ENCODE measurements at regions of chr20 and their contacts with region 1.

Region 1: GRCh38 chr20:49583669-49584417 is 15.9 kb upstream of the PTGIS start:
- DNase-seq: peak; percentile 82 to 95
- ATAC-seq: peak; percentile 87 to 92
- H3K4me3 ChIP-seq: no peak overlapping the region
- H3K27ac ChIP-seq: peak overlapping the region; percentile 84 to 88
- H3K4me1 ChIP-seq: peaks cover 52% of the 10 kb centered on the region
- CTCF ChIP-seq: no peak
- EP300 ChIP-seq: peak; percentile 86 to 87; a peak in 4 of 5 replicates
- POLR2A ChIP-seq: no peak
- RAD21 ChIP-seq: peak in 1 of 2 experiments; percentile 22; a peak in 2 of 5 replicates

Region 2: DNA sequence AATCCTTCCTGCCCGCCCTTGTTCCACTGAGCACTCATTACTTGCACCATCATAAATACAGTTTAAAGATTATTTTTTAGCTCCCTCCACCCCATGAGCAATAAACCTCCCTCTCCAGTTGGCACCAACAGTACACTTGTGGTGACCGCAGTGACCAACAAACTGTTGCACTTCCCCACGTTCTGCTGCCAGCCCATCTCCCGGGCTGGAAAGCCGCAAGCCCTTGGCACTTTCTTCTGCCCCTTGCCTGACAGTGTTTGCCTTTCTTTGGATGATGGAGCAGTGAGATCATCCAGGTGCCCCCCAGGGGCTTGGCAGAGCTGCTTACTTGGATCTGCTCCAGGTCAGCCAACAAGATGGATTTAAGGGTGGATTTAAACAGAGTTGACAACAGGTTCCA is 122.9 kb before region 1 on chr20:
- CTCF ChIA-PET with region 1: no interaction called
- POLR2A ChIA-PET with region 1: no interaction called
- DNase-seq: no peak
- ATAC-seq: no peak
- H3K4me3 ChIP-seq: no peak overlapping the region
- H3K27ac ChIP-seq: no peak overlapping the region
- H3K4me1 ChIP-seq: 0 out of 3 replicates have a peak, but pooled peaks cover 7% of the 10 kb centered on the region
- CTCF ChIP-seq: no peak
- EP300 ChIP-seq: no peak
- POLR2A ChIP-seq: no peak
- RAD21 ChIP-seq: no peak

Region 3: DNA sequence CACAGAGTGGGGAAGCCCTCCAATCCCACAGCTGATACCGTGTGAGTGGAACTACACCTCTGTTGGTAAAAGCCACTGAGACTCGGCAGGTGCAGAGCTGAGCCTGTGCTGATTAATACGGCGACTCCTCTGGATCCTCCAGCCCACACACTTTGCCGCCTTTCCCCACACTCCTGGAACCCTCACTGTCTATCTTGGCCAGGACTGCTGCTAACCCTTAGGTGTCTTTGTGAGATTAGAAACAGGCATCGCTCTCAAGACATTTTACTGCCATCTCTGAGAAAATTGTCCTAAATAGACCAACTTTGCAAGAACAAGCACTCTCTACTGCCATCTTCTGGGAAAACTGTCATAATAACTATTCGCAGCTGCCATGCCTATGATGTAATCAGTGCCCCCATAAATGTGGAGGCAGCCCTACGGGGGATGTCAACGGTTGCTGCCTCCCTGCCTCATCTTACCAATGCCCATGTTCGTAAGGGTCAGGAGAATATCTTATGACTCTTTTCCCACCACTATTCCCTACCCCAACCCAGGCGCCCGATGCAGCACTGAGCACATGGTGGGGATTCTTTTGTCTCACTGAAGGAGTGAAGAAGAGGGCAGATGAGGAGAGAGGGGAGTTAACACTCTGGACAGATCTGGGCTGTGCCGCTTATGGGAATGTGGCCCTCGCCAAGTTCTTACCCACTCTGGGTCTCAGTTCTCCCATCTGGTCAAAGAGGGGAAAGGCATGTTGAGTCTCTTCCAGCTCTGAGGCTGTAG is 75.2 kb before region 1 on chr20:
- CTCF ChIA-PET with region 1: no interaction called
- POLR2A ChIA-PET with region 1: no interaction called
- DNase-seq: peak; percentile 52 to 61
- ATAC-seq: peak; percentile 66 to 80
- H3K4me3 ChIP-seq: no peak overlapping the region
- H3K27ac ChIP-seq: peak overlapping the region; percentile 21 to 50; a peak in 2 of 6 replicates
- H3K4me1 ChIP-seq: peaks cover 12% of the 10 kb centered on the region; the same call in 1 of the 3 replicates
- CTCF ChIP-seq: peak; percentile 81
- EP300 ChIP-seq: no peak
- POLR2A ChIP-seq: no peak
- RAD21 ChIP-seq: peak; percentile 67 to 72

Region 4: DNA sequence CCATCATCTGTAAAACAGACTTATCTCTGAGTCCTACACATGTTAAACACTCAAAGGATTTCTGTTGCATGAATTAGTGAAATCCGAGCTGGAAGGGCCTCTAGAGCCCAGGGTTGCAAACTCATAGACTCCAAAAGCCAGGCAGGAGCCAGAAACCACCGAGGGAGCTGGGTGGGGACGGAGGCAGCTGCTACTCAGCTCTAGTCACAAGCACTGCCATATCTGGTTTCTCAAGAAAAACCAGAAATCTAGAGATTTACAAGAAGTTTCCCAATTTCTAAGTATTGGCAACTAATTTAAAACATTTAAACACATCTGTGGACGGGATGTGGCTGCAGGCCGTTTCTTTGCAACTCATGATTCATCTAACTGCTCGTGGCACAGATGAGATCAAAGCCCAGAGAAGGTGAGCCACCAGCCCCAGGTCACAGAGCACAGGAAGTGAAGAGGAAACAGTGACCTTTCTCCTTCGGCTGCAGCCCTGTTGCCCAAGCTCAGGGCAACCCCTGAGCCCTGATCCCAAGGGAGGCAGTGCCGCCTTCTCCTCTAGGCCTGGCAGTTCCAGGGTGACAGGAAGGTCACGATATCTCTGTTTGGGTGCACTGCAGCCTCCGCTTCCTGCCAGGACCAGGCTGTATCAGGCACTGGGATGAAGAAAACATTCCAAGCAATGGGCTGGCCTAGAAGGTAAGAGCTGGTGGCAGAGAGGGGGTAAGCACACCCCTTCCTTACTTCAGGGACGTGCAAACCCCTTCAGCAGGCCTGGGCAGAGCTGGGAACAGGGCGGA is 10.5 kb after region 1 on chr20:
- CTCF ChIA-PET with region 1: interaction called, 13 read pairs
- POLR2A ChIA-PET with region 1: interaction called, 3 read pairs
- DNase-seq: no peak
- ATAC-seq: peak; percentile 30 to 58; a peak in 4 of 6 replicates
- H3K4me3 ChIP-seq: no peak overlapping the region
- H3K27ac ChIP-seq: peak overlapping the region; percentile 53 to 78
- H3K4me1 ChIP-seq: peaks cover 37% of the 10 kb centered on the region
- CTCF ChIP-seq: no peak
- EP300 ChIP-seq: no peak
- POLR2A ChIP-seq: no peak
- RAD21 ChIP-seq: no peak

Region 5: DNA sequence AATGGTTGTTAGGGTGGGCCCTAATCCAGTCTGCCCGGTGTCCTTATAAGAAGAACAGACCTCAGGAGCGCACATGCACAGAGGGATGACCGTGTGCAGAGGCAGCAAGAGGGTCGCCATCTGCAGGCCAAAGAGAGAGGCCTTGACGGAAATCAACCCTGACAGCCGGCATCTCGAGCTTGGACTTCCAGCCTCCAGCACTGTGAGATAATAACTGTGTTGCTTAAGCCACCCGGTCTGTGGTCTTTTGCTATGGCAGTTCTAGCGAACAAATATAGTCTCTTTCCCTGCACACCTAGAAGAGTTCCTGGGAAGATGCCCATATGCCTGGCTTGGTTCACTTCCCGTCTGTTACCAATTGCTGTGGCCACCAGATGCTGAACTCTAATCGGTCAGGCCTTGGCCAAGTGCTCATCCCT is 19.4 kb after region 1 on chr20:
- CTCF ChIA-PET with region 1: interaction called, 115 read pairs
- POLR2A ChIA-PET with region 1: no interaction called
- DNase-seq: peak in 1 of 2 experiments; percentile 69
- ATAC-seq: peak; percentile 67 to 79
- H3K4me3 ChIP-seq: no peak overlapping the region
- H3K27ac ChIP-seq: peak overlapping the region; percentile 69 to 75; a peak in 4 of 6 replicates
- H3K4me1 ChIP-seq: peaks cover 21% of the 10 kb centered on the region
- CTCF ChIP-seq: peak; percentile 39
- EP300 ChIP-seq: no peak
- POLR2A ChIP-seq: no peak
- RAD21 ChIP-seq: peak; percentile 35 to 55; a peak in 4 of 5 replicates